ENCODE measurements at regions of chr6 and their contacts with region 1.

Region 1: DNA sequence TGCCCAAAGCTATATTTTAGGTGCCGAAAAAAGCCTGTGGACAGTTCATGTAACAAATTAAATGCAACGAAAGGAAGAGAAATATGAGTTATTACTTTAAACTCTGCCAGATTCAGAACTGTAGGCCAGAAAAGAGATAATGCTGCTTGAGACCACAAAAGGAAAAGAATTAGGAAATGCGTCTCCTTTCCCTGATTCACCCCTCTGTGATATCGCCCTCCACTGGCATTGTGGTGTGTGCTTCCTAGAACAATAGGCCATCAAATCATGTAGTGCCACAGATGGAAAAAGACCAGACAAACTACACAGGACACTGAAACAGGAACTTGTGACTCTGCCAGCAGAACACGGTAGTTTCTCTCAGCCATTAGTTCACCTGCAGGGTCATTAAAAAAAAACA is 14.7 kb upstream of the LAMA4 start:
- DNase-seq: no peak
- H3K4me3 ChIP-seq: no peak overlapping the region
- H3K27me3 ChIP-seq: no peaks in the 10 kb centered on the region
- CTCF ChIP-seq: peak; percentile 34

Region 2: DNA sequence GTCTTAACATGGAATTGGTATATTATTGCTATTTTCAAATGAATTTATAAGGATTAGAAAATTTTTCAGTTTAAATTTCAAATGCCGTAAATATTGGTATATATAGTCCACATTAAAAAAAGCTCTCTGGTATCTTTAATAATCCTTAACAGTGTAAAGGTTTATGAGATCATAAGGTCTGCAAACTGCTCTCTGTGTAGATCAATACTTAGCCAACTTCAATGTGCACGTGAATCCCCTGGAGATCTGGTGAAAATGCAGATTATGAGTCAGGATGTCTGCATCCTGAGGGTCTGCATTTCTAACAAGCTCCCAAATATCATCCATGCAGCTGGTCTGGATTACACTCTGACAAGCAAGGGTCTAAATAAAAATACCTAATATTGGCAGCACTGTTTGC is 58.3 kb before region 1 on chr6:
- CTCF ChIA-PET with region 1: no interaction called
- POLR2A ChIA-PET with region 1: no interaction called
- DNase-seq: no peak
- H3K4me3 ChIP-seq: no peak overlapping the region
- H3K27me3 ChIP-seq: no peaks in the 10 kb centered on the region
- CTCF ChIP-seq: no peak

Region 3: GRCh38 chr6:112223070-112223861 is 45.8 kb before region 1 on chr6:
- CTCF ChIA-PET with region 1: no interaction called
- POLR2A ChIA-PET with region 1: interaction called, 10 read pairs
- DNase-seq: peak; percentile 93
- H3K4me3 ChIP-seq: no peak overlapping the region
- H3K27me3 ChIP-seq: no peaks in the 10 kb centered on the region
- CTCF ChIP-seq: no peak

Region 4: DNA sequence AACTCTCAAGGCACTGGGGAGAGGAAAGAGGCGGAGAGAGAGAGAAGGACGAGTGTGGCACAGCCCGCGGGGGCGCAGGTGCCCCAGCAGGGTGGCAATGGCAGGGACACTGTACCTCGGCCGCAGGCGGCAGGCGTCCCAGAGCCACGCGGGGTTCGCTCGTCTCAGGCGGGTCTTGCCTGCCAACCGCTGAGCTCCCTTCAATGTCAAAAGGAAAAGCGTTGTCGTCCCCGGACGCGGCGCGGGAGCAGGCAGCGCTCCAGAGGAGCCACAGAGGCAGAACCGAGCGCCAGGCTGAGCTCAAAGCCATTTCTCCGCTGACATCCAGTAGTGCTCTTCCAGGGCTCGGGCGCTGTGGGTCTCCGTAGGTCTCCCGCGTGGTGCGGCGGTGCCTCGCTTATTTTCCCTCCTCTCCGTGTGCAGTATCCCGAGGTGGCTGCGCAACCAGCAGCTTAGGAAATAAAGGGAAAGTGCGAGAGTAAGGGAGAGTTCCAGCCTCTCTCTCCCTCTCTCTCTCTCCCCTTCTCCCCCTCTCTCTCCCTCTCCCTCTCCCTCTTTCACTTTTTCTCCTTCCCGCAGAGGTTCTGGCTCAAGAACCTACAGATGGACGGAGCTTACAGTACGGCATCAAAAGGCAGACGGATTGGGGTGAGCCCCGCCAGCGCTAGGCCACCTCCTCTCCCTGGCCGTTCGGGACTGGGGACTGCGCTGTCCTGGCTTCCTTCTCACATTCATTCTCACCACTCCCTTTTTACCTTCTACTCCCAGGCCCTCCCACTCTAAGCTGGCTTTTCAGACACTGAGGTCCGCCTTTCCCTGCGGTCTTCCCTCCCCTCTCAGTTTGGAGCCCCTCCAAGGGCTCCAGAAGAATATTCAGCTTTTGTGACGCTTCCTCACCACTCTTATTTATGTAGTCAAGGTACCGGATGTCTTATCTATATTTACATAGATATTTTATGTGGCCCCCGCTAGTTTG is 15.0 kb before region 1 on chr6 and contains the start of gene LAMA4:
- CTCF ChIA-PET with region 1: interaction called, 11 read pairs
- POLR2A ChIA-PET with region 1: no interaction called
- DNase-seq: no peak
- H3K4me3 ChIP-seq: peak within 1 kb of the TSS; percentile 52
- H3K27me3 ChIP-seq: no peaks in the 10 kb centered on the region
- CTCF ChIP-seq: no peak
- polyA plus RNA-seq, gene LAMA4: 268 and 301 TPM in 2 replicates

Region 5: GRCh38 chr6:112429226-112429625 is 160.1 kb after region 1 on chr6:
- CTCF ChIA-PET with region 1: no interaction called
- POLR2A ChIA-PET with region 1: no interaction called
- DNase-seq: no peak
- H3K4me3 ChIP-seq: no peak overlapping the region
- H3K27me3 ChIP-seq: no peaks in the 10 kb centered on the region
- CTCF ChIP-seq: no peak

Measured in BJ (cell line).